ENCODE measurements at regions of chr22 and their contacts with region 1.

Region 1: GRCh38 chr22:38610234-38610633 is 40.3 kb upstream of the DMC1 start:
- DNase-seq: no peak
- H3K4me3 ChIP-seq: no peak overlapping the region
- H3K27ac ChIP-seq: no peak overlapping the region
- H3K4me1 ChIP-seq: no peaks in the 10 kb centered on the region
- H3K27me3 ChIP-seq: no peaks in the 10 kb centered on the region
- CTCF ChIP-seq: no peak
- EP300 ChIP-seq: no peak
- POLR2A ChIP-seq: no peak

Region 2: GRCh38 chr22:38554281-38554680 is 56.0 kb before region 1 on chr22:
- intact Hi-C with region 1: no loop called
- DNase-seq: no peak
- H3K4me3 ChIP-seq: no peak overlapping the region
- H3K27ac ChIP-seq: no peak overlapping the region
- H3K4me1 ChIP-seq: no peaks in the 10 kb centered on the region
- H3K27me3 ChIP-seq: no peaks in the 10 kb centered on the region
- CTCF ChIP-seq: no peak
- EP300 ChIP-seq: no peak
- POLR2A ChIP-seq: no peak

Region 3: GRCh38 chr22:38628444-38628843 is 18.2 kb after region 1 on chr22:
- intact Hi-C with region 1: loop called in 1 of 4 experiments (anchors 1 kb)
- DNase-seq: no peak
- H3K4me3 ChIP-seq: no peak overlapping the region
- H3K27ac ChIP-seq: no peak overlapping the region
- H3K4me1 ChIP-seq: no peaks in the 10 kb centered on the region
- H3K27me3 ChIP-seq: no peaks in the 10 kb centered on the region
- CTCF ChIP-seq: no peak
- EP300 ChIP-seq: no peak
- POLR2A ChIP-seq: no peak